HEK293 (cell line): ENCODE measurements at regions of chr6 and their contacts with region 1.

Region 1: DNA sequence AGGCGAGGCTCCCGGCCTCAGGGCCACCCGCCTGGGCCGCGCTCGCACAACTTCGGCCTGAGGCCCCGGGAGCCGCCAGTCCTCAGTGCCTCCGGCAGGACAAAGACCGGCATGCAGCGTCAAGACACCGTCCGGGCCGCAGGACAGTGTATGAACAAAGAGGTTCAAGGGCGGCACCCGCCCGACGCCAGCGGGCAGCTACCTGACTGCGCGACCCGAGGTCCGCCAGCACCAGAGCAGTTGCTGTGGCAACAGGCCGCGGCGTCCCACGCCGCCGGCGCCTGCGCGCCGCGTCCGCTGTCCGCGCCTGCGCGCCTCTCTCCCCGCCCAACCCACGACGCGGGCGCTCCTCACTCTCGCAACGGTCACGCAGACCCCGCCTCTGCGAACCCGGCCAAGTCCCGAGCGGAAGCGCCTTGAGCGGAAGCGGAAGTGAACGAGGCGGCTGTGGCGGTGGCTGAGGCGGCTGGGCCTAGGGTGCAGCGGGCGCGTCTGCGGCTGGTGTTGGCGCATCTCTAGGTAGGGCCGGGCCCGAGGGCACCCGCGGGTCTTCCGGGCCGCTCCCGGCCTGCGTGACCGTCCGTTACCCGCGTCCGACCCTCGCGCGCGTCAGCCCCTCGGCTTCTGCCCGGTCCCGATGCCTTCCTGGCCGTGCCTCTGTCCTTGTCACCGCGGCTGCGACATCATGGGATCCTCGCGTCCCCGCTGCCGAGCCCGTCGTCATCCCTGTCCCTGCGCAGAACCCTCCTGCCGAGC is at the start of gene FAM120B:
- H3K4me3 ChIP-seq: peak within 1 kb of the TSS; percentile 79
- H3K27ac ChIP-seq: peak within 1 kb of the TSS; percentile 73; the same call in 1 of the 2 replicates
- H3K4me1 ChIP-seq: 0 out of 2 replicates have a peak, but pooled peaks cover 2% of the 10 kb centered on the region
- CTCF ChIP-seq: 0 out of 2 replicates have a peak, but pooled peaks have one; percentile 31

Region 2: DNA sequence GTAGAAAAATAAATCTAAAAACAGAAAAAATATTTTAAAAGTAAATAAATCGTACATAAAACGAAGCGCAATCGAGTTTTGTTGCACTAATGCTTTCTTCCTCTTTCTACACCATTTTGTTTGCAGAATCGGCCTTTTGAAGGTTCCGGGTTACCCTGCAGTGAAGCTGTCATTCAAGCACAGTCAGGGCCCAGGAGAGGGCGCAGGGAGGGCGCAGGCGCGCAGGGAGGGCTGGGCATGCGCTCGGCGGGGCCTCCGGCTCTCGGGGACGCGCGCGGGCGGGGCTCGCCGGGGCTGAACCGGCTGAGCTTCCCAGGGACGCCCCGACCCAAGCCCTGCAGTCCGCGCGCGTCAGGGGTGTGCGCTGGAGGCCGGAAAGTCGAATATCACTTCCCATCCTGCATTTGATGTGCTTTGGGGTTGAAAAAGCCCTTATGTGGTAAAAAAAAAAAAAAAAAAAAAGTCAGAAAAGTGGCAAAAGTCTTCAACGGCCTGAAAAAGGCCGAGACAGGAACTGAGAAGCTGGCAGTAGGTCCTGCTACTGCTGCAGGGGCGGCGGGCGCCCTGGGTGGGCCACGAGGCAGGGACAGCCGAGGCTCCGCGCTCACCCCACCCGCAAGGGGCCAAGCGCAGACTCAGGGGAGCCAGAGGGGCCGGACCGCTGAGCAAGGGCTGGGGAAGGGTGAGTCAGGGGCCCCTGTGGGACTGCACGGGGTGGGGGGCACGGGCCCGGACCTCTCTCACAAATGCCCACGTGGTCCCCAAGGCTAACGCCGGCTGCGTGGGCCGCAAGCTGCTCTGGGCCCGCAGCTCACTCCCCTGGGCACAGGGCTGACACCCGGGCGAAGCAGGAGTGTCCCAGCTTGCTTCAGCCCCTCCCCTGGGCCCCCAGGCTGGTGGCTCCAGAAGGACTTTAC is 1093.3 kb before region 1 on chr6:
- CTCF ChIA-PET with region 1: no interaction called
- POLR2A ChIA-PET with region 1: interaction called, 11 read pairs
- H3K4me3 ChIP-seq: peak overlapping the region; percentile 23
- H3K27ac ChIP-seq: no peak overlapping the region; the same call in 1 of the 2 replicates
- H3K4me1 ChIP-seq: no peaks in the 10 kb centered on the region
- CTCF ChIP-seq: no peak

Region 3: GRCh38 chr6:169933839-169934698 is 372.4 kb before region 1 on chr6:
- CTCF ChIA-PET with region 1: no interaction called
- POLR2A ChIA-PET with region 1: no interaction called
- H3K4me3 ChIP-seq: no peak overlapping the region
- H3K27ac ChIP-seq: no peak overlapping the region
- H3K4me1 ChIP-seq: no peaks in the 10 kb centered on the region
- CTCF ChIP-seq: no peak

Region 4: GRCh38 chr6:170129691-170130171 is 176.8 kb before region 1 on chr6:
- CTCF ChIA-PET with region 1: no interaction called
- POLR2A ChIA-PET with region 1: no interaction called
- H3K4me3 ChIP-seq: no peak overlapping the region
- H3K27ac ChIP-seq: no peak overlapping the region
- H3K4me1 ChIP-seq: no peaks in the 10 kb centered on the region
- CTCF ChIP-seq: no peak

Region 5: GRCh38 chr6:170291271-170292110 is 15.0 kb before region 1 on chr6:
- CTCF ChIA-PET with region 1: no interaction called
- POLR2A ChIA-PET with region 1: interaction called, 11 read pairs
- H3K4me3 ChIP-seq: peak overlapping the region; percentile 24
- H3K27ac ChIP-seq: peak overlapping the region; percentile 50; the same call in 1 of the 2 replicates
- H3K4me1 ChIP-seq: peaks cover 8% of the 10 kb centered on the region
- CTCF ChIP-seq: no peak